Endothelial cell of umbilical vein (primary cell): ENCODE measurements at regions of chr7 and their contacts with region 1.

Region 1: DNA sequence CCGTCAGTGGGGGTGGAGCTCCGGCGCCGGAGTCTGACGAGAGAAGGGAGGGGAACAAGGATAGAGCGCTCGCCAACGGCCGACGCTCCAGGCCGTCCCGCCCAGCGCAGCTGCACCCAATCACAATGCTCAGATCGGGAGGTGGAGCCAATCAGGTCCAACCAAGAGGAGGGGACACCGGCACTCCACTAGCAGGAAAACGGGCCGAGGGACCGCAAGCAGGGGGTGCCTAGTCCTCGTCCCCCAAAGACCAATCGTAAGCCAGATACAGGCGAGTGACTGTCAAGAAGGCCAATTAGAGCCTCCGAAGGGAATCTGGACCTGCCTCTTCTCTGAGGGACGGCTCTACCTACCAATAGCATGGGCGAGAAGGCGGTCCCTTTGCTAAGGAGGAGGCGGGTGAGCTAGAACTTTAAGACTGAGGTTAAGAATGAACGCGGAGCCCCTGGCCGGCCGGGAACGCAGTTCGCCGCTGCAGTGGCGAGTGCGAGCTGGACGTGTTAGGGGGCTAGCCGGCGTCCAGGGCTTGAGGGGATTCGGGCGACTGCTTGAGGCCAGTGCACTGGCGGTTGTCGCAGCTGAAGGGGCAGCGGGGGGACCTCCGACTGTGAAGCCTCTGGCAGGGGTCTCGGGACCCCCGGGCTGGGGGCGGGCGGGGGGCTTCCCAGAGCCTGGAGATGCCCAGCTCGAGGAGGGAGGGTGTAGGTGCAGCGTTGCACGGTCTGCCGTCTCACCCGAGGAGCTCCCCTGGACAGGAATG is at the start of gene FBXO24:
- DNase-seq: peak; percentile 100
- H3K4me3 ChIP-seq: peak within 1 kb of the TSS; percentile 86 to 95 (median 93)
- H3K27ac ChIP-seq: peak within 1 kb of the TSS; percentile 65
- H3K4me1 ChIP-seq: peaks cover 32% of the 10 kb centered on the region
- H3K27me3 ChIP-seq: peaks cover 0 to 4% of the 10 kb centered on the region in 2 experiments
- CTCF ChIP-seq: no peak
- POLR2A ChIP-seq: peak; percentile 72
- total RNA-seq, gene FBXO24: 0.35 and 0.38 TPM in 2 replicates

Region 2: DNA sequence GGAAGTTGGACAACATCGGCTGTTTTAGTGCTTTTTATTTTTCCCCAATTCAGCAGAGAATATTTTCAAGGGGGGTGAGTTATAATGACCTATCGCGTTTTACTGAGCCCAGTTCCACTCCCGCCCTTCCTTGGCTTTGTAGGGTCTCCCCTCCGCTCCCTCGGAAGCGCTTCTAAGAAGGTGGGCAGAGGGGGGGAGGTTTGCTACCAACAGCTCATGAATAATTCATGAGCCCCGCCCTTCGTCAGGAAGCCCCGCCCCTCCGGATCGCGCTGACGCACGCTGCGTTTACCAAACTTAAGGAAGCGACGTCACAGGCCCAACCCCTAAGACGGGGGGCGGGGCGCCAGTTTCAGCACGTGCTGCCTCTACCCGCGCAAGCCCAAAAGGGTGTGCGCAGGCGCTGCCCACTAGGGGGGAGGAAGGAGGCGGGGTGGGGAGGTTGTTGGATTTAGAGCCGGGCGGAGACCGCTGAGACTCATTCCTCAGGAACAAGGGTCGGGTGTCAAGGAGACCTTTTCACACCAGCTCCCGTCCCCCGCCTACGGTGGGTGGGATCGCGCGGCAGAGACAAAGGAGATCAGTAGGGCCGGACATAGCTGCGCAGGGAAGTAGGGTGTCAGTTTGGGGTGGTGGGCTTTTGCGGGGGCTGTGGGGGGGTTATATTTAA is 157.3 kb before region 1 on chr7:
- CTCF ChIA-PET with region 1: no interaction called
- POLR2A ChIA-PET with region 1: interaction called, 12 read pairs
- dilution Hi-C with region 1: no loop called
- intact Hi-C with region 1: no loop called
- DNase-seq: peak; percentile 100
- H3K4me3 ChIP-seq: peak overlapping the region; percentile 55 to 80 (median 69)
- H3K27ac ChIP-seq: peak overlapping the region; percentile 89
- H3K4me1 ChIP-seq: peaks cover 19% of the 10 kb centered on the region
- H3K27me3 ChIP-seq: no peaks in the 10 kb centered on the region
- CTCF ChIP-seq: no peak
- POLR2A ChIP-seq: peak; percentile 92

Region 3: GRCh38 chr7:100478966-100479665 is 107.3 kb before region 1 on chr7 and contains the start of gene TSC22D4:
- CTCF ChIA-PET with region 1: interaction called, 17 read pairs
- POLR2A ChIA-PET with region 1: no interaction called
- dilution Hi-C with region 1: no loop called
- intact Hi-C with region 1: loop called (anchors 1 kb)
- DNase-seq: peak; percentile 90
- H3K4me3 ChIP-seq: peak within 1 kb of the TSS; percentile 91 to 99 (median 91)
- H3K27ac ChIP-seq: peak within 1 kb of the TSS; percentile 35
- H3K4me1 ChIP-seq: peaks cover 27% of the 10 kb centered on the region
- H3K27me3 ChIP-seq: no peaks in the 10 kb centered on the region
- CTCF ChIP-seq: no peak
- POLR2A ChIP-seq: peak; percentile 94
- total RNA-seq, gene TSC22D4: 66.3 and 84.4 TPM in 2 replicates

Region 4: GRCh38 chr7:100563809-100564400 is 22.5 kb before region 1 on chr7:
- CTCF ChIA-PET with region 1: interaction called, 34 read pairs
- POLR2A ChIA-PET with region 1: interaction called, 6 read pairs
- dilution Hi-C with region 1: no loop called
- intact Hi-C with region 1: loop called (anchors 1 kb)
- DNase-seq: peak; percentile 53
- H3K4me3 ChIP-seq: no peak overlapping the region
- H3K27ac ChIP-seq: no peak overlapping the region
- H3K4me1 ChIP-seq: peaks cover 2% of the 10 kb centered on the region
- H3K27me3 ChIP-seq: no peaks in the 10 kb centered on the region
- CTCF ChIP-seq: peak; percentile 90 to 94
- POLR2A ChIP-seq: no peak

Region 5: GRCh38 chr7:100604028-100604975 is 17.9 kb after region 1 on chr7:
- CTCF ChIA-PET with region 1: interaction called, 10 read pairs
- POLR2A ChIA-PET with region 1: interaction called, 4 read pairs
- dilution Hi-C with region 1: no loop called
- intact Hi-C with region 1: loop called (anchors 1 kb)
- DNase-seq: peak; percentile 43
- H3K4me3 ChIP-seq: peak overlapping the region; percentile 44 to 65 (median 54)
- H3K27ac ChIP-seq: no peak overlapping the region
- H3K4me1 ChIP-seq: peaks cover 25% of the 10 kb centered on the region
- H3K27me3 ChIP-seq: no peaks in the 10 kb centered on the region
- CTCF ChIP-seq: peak; percentile 43 to 55
- POLR2A ChIP-seq: no peak

Region 6: DNA sequence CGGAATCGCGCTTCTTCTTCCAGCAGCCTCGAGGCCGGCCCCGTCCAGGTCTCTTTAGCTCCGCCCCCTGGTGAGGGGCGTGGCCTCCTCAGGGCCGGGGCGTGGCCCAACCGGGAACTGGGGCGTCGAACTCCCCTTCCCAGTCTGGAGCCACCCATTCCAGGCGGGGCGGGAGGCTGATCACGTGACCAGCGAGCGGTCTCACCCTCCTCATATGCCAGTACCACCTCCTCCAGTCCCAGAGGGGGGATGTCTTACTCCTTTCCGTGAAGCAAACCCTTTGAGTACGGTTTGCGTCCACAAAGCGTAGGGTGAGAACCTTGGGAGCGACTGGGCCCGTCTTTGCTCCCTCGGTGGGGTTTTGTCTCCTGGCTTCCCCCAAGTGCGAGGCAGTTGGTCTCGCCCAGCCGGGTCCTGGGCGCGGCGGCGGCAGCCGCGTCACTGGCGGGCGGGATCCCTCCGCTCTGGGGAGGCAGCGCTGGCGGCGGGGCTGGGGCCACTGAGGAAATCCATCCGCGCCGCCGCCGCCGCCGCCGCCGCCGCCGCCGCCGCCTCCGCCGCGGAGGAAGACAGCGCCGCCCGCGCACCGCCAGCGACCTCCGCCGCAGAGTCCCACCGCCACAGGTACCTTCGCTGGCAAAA is 87.0 kb after region 1 on chr7 and contains the start of gene GNB2:
- CTCF ChIA-PET with region 1: interaction called, 3 read pairs
- POLR2A ChIA-PET with region 1: interaction called, 14 read pairs
- dilution Hi-C with region 1: no loop called
- intact Hi-C with region 1: loop called (anchors 1 kb)
- DNase-seq: peak; percentile 99
- H3K4me3 ChIP-seq: peak within 1 kb of the TSS; percentile 70 to 88 (median 86)
- H3K27ac ChIP-seq: peak within 1 kb of the TSS; percentile 89
- H3K4me1 ChIP-seq: peaks cover 4% of the 10 kb centered on the region
- H3K27me3 ChIP-seq: peaks cover 2 to 5% of the 10 kb centered on the region in 2 experiments
- CTCF ChIP-seq: no peak
- POLR2A ChIP-seq: peak; percentile 51
- total RNA-seq, gene GNB2: 297 and 300 TPM in 2 replicates

Region 7: DNA sequence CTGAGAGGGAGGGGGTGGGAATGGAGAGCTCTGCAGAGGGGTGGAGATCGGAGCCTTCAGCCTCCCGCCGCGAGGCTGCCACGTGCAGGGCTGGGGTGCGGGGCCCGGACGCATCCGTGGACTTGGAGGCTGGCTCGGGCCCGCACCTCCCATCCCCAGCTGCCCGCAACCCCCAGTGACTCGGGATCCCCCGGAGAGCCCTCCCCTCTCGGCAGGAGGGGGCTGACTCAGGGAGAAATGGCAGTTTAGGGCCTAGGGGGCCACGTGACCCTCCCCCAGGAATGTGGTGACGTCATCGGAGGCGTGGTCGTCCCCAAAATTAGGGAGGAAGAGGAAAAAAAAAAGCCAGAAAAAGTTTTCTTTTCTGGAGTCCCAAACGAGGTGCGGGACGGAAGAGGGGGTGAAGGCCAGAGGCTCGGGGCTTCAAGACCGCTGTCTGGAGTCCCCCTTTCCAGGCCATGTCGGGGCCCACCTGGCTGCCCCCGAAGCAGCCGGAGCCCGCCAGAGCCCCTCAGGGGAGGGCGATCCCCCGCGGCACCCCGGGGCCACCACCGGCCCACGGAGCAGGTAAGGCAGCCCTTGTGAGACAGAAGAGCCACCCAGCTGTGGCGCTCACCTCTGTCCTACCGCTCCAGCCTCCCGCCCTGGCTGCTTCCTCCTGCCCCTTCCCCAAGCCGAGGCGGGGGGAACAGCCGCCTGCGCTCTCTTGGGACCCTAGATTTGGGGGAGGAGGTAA is 280.8 kb after region 1 on chr7 and contains the start of gene TRIP6:
- CTCF ChIA-PET with region 1: no interaction called
- POLR2A ChIA-PET with region 1: no interaction called
- dilution Hi-C with region 1: no loop called
- intact Hi-C with region 1: loop called (anchors 10 kb)
- DNase-seq: peak; percentile 76
- H3K4me3 ChIP-seq: peak within 1 kb of the TSS; percentile 72 to 93 (median 87)
- H3K27ac ChIP-seq: peak within 1 kb of the TSS; percentile 90
- H3K4me1 ChIP-seq: peaks cover 36% of the 10 kb centered on the region
- H3K27me3 ChIP-seq: no peaks in the 10 kb centered on the region
- CTCF ChIP-seq: no peak
- POLR2A ChIP-seq: peak; percentile 82
- total RNA-seq, gene TRIP6: 84.5 and 90.3 TPM in 2 replicates